ENCODE measurements at regions of chr14 and their contacts with region 1.

Region 1: GRCh38 chr14:78448164-78449094 is 278.3 kb downstream of the NRXN3 start:
- DNase-seq: peak; percentile 48 to 82 (median 66)
- H3K4me3 ChIP-seq: no peak overlapping the region
- H3K27ac ChIP-seq: peak overlapping the region in 1 of 59 donors; percentile 5
- H3K27me3 ChIP-seq: no peaks in the 10 kb centered on the region
- CTCF ChIP-seq: peak; percentile 56 to 90 (median 82)

Region 2: GRCh38 chr14:78327426-78328221 is 120.8 kb before region 1 on chr14:
- intact Hi-C with region 1: no loop called
- DNase-seq: no peak
- H3K4me3 ChIP-seq: no peak overlapping the region
- H3K27ac ChIP-seq: no peak overlapping the region
- H3K27me3 ChIP-seq: no peaks in the 10 kb centered on the region
- CTCF ChIP-seq: no peak

Region 3: DNA sequence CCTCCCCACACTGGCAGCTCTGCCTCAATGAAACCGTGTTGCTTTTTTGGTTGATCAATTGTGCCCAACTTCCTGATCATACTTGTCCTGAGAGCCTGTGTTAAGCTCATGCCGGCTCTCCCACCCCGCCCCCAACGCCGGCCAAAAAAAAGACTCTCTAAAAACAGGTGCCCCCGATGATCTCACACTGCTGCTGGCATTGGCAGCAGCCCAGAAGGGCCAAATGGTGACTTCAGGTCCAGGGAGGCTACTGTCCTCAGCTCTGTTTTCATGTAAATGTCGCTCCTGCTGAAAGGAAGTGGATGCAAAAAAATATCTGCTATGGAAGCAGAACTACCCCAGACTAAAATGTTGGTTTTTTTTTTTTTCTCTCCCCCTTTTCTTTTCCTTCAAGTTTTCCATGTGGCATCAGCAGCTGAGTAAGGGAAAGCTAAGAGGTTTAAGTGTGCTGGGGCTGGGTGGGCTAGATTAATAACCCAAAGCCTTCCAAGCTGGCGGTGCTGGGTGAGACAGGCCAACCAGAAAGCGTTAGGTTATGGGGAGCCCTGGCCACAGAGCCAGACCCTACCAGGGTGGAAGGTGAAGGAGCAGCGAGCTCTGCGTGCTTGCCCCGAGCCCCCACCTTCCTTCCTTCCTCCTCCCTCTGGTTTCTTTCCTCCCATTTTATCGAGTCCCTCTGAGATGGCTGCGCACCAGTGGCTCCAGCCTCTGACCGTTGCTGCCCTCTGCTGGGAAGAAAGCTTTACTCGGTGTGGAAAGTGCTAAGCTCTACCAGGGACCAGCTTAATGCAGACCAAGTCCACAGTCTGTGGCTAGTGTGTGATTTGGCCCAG is 117.8 kb after region 1 on chr14:
- intact Hi-C with region 1: loop called (anchors 1 to 2 kb)
- DNase-seq: peak; percentile 73 to 91 (median 87)
- H3K4me3 ChIP-seq: peak overlapping the region; percentile 11 to 68 (median 51)
- H3K27ac ChIP-seq: peak overlapping the region in 30 of 59 donors; percentile 10 to 83 (median 52)
- H3K27me3 ChIP-seq: no peaks in the 10 kb centered on the region
- CTCF ChIP-seq: peak; percentile 55 to 92 (median 85)

Region 4: GRCh38 chr14:78598041-78598920 is 149.9 kb after region 1 on chr14:
- intact Hi-C with region 1: loop called in 1 of 2 experiments (anchors 10 kb)
- DNase-seq: peak; percentile 30 to 74 (median 64)
- H3K4me3 ChIP-seq: peak overlapping the region in 35 of 59 donors; percentile 1 to 58 (median 30)
- H3K27ac ChIP-seq: peak overlapping the region in 28 of 59 donors; percentile 1 to 68 (median 36)
- H3K27me3 ChIP-seq: no peaks in the 10 kb centered on the region
- CTCF ChIP-seq: peak; percentile 54 to 94 (median 88)

Region 5: GRCh38 chr14:78836777-78837176 is 388.3 kb after region 1 on chr14:
- intact Hi-C with region 1: loop called in 1 of 2 experiments (anchors 5 kb)
- DNase-seq: peak in 8 of 10 donors; percentile 5 to 75 (median 53)
- H3K4me3 ChIP-seq: no peak overlapping the region
- H3K27ac ChIP-seq: peak overlapping the region in 32 of 59 donors; percentile 2 to 84 (median 64)
- H3K27me3 ChIP-seq: no peaks in the 10 kb centered on the region
- CTCF ChIP-seq: peak; percentile 31 to 79 (median 62)

Measured in dorsolateral prefrontal cortex (tissue), 120 donors.